A549 (cell line): ENCODE measurements at regions of chr1 and their contacts with region 1.

Region 1: DNA sequence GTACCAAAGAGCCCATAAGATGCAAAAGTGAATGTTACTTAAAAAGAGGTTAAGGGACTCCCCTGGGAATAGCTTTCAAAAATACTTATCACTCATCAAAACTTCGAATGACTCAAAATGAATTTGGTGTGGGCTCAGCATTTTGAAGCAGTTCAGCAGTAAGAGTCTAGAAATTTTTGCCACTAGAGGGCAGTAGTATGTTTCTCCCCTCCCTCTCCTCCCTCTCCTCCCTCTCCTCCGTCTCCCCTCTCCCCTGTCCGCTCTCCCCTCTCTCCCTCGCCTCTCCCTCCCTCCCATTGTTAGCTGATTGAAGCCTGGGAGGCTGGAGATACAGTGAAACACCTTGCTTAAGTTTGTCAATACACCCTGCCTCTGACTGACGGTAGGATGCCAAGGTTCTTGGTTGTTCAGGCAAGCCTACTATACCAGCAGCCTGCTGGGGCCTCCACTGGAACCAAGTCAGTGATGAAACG is 70.8 kb upstream of the TENT5C start:
- DNase-seq: peak; percentile 5 to 53
- ATAC-seq: peak; percentile 87 to 95
- H3K4me3 ChIP-seq: no peak overlapping the region
- H3K27ac ChIP-seq: no peak overlapping the region
- H3K4me1 ChIP-seq: no peaks in the 10 kb centered on the region
- CTCF ChIP-seq: peak; percentile 66
- EP300 ChIP-seq: no peak
- POLR2A ChIP-seq: no peak
- RAD21 ChIP-seq: peak; percentile 57 to 60

Region 2: DNA sequence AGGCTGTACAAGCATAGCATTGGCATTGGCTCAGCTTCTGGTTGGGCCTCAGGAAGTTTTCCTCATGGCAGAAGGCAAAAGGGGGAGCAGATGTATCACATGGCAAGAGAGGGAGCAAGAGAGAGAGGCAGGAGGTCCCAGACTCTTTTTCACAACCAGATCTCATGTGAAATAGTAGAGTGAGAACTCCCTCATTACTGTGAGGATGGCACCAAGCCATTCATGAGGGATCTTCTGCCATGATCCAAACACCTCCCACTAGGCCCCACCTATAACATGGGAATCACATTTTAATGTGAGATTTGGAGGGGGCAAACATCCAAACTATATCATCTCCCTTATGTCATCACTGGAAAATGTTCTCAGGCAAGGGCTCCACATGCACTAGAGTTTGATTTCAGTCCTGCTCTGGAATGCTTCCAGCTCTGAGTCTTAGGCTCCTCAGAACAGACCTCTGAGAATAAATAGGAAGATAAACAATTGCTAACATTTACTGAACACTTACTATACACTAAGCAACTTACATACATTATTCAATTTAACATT is 284.9 kb before region 1 on chr1:
- CTCF ChIA-PET with region 1: no interaction called
- POLR2A ChIA-PET with region 1: no interaction called
- DNase-seq: no peak
- ATAC-seq: no peak
- H3K4me3 ChIP-seq: no peak overlapping the region
- H3K27ac ChIP-seq: no peak overlapping the region
- H3K4me1 ChIP-seq: no peaks in the 10 kb centered on the region
- CTCF ChIP-seq: no peak
- EP300 ChIP-seq: no peak
- POLR2A ChIP-seq: no peak
- RAD21 ChIP-seq: no peak

Region 3: DNA sequence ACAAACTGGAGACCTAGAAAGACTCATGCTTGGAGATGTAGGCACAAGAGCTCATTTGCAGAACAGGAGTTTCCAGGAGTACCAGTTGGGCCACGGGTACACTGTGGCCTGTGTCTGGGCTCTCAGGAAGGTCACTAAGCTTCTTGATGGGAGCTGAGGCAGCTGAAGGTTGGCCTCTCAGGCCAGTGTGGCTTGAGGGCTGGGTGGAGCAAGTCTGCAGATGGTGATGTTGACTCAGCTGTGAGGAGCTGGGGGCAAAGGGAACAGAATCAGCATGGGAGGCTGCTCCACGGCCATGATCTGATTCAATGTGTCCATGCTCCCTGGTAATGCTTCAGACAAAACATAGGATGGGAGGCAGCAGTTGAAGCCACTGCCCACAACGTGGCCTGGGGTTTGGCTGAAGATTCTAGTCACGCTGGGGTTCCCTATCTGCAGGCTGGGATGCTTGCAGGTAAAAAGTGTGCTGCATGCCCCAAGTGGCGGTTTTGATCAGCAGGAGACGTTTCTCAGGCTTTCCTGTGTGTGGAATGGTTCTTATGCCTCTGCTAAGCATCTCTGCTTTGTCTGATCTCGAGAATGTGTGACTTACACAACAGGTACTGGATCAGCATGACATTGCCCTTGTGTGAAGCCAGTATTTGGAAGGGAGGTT is 55.4 kb after region 1 on chr1:
- CTCF ChIA-PET with region 1: interaction called, 11 read pairs
- POLR2A ChIA-PET with region 1: no interaction called
- DNase-seq: no peak
- ATAC-seq: 0 out of 6 replicates have a peak, but pooled peaks of 1 of the 2 experiments have one; percentile 10
- H3K4me3 ChIP-seq: no peak overlapping the region
- H3K27ac ChIP-seq: no peak overlapping the region
- H3K4me1 ChIP-seq: no peaks in the 10 kb centered on the region
- CTCF ChIP-seq: no peak
- EP300 ChIP-seq: no peak
- POLR2A ChIP-seq: no peak
- RAD21 ChIP-seq: no peak

Region 4: GRCh38 chr1:117895482-117896114 is 360.6 kb after region 1 on chr1:
- CTCF ChIA-PET with region 1: interaction called, 17 read pairs
- POLR2A ChIA-PET with region 1: no interaction called
- DNase-seq: peak; percentile 15 to 64
- ATAC-seq: peak; percentile 30 to 56; a peak in 3 of 6 replicates
- H3K4me3 ChIP-seq: no peak overlapping the region
- H3K27ac ChIP-seq: no peak overlapping the region
- H3K4me1 ChIP-seq: no peaks in the 10 kb centered on the region
- CTCF ChIP-seq: peak; percentile 71
- EP300 ChIP-seq: no peak
- POLR2A ChIP-seq: no peak
- RAD21 ChIP-seq: peak; percentile 68 to 76